Natural killer cell (primary cell): ENCODE measurements at regions of chr3 and their contacts with region 1.

Region 1: GRCh38 chr3:127652231-127652995 is 20.3 kb upstream of the ABTB1 start:
- DNase-seq: peak in 1 of 2 donors; percentile 72
- ATAC-seq: peak; percentile 44 to 70 (median 60)
- H3K4me3 ChIP-seq: no peak overlapping the region
- H3K4me3 Mint-ChIP-seq: no peak overlapping the region
- H3K27ac ChIP-seq: no peak overlapping the region
- H3K27ac Mint-ChIP-seq: no peak overlapping the region
- H3K4me1 ChIP-seq: no peaks in the 10 kb centered on the region
- H3K4me1 Mint-ChIP-seq: no peaks in the 10 kb centered on the region
- H3K27me3 ChIP-seq: no peaks in the 10 kb centered on the region
- H3K27me3 Mint-ChIP-seq: no peaks in the 10 kb centered on the region
- CTCF ChIP-seq: peak; percentile 77

Region 2: GRCh38 chr3:127458696-127459604 is 193.5 kb before region 1 on chr3:
- intact Hi-C with region 1: no loop called
- DNase-seq: peak in 1 of 2 donors; percentile 32
- ATAC-seq: no peak
- H3K4me3 ChIP-seq: no peak overlapping the region
- H3K4me3 Mint-ChIP-seq: no peak overlapping the region
- H3K27ac ChIP-seq: no peak overlapping the region
- H3K27ac Mint-ChIP-seq: no peak overlapping the region
- H3K4me1 ChIP-seq: peaks cover 3% of the 10 kb centered on the region
- H3K4me1 Mint-ChIP-seq: peaks cover 0 to 7% of the 10 kb centered on the region in 2 donors
- H3K27me3 ChIP-seq: peaks cover 11% of the 10 kb centered on the region
- H3K27me3 Mint-ChIP-seq: peaks cover 51 to 53% of the 10 kb centered on the region in 2 donors
- CTCF ChIP-seq: no peak

Region 3: GRCh38 chr3:127831723-127832172 is 179.3 kb after region 1 on chr3:
- intact Hi-C with region 1: loop called (anchors 5 kb)
- DNase-seq: peak; percentile 27 to 45
- ATAC-seq: peak; percentile 60 to 71 (median 69)
- H3K4me3 ChIP-seq: no peak overlapping the region
- H3K4me3 Mint-ChIP-seq: no peak overlapping the region
- H3K27ac ChIP-seq: no peak overlapping the region
- H3K27ac Mint-ChIP-seq: no peak overlapping the region
- H3K4me1 ChIP-seq: no peaks in the 10 kb centered on the region
- H3K4me1 Mint-ChIP-seq: no peaks in the 10 kb centered on the region
- H3K27me3 ChIP-seq: no peaks in the 10 kb centered on the region
- H3K27me3 Mint-ChIP-seq: peaks cover 0 to under 1% of the 10 kb centered on the region in 2 donors
- CTCF ChIP-seq: peak; percentile 66